ENCODE measurements at regions of chr20 and their contacts with region 1.

Region 1: DNA sequence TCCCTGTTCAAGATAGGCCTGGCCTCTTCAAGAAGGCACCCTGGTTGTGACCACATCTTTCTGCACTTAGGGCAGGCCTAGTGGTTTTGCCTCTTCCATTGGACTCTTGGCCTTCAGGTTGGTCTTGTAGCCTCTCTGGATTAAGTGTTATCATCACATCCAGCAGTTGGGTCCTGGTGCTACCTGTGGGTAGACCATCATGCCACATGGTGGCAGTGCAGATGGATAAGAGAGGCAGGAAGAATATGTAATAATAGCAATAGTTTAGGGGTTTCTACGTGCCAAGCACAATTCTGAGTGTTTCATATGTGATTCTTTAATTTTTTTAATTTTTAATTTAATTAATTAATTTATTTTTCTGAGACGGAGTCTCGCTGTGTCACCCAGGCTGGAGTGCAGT is 28.5 kb upstream of the SNRPB2 start:
- DNase-seq: no peak
- ATAC-seq: no peak
- H3K4me3 ChIP-seq: no peak overlapping the region
- H3K27ac ChIP-seq: no peak overlapping the region
- H3K4me1 ChIP-seq: no peaks in the 10 kb centered on the region
- H3K27me3 ChIP-seq: peaks cover 0 to 5% (median 0%) of the 10 kb centered on the region in 9 donors
- CTCF ChIP-seq: peak in 5 of 12 donors; percentile 13 to 34 (median 18)
- POLR2A ChIP-seq: no peak

Region 2: GRCh38 chr20:16761305-16761829 is 60.1 kb after region 1 on chr20:
- intact Hi-C with region 1: loop called in 5 of 10 experiments (anchors 5 to 10 kb)
- DNase-seq: peak in 4 of 5 donors; percentile 26 to 38 (median 26)
- ATAC-seq: peak in 3 of 4 donors; percentile 76 to 78 (median 78)
- H3K4me3 ChIP-seq: no peak overlapping the region
- H3K27ac ChIP-seq: no peak overlapping the region
- H3K4me1 ChIP-seq: peaks cover 0 to 5% (median 0%) of the 10 kb centered on the region in 12 donors
- H3K27me3 ChIP-seq: peaks cover 0 to 14% (median 2%) of the 10 kb centered on the region in 9 donors
- CTCF ChIP-seq: peak; percentile 47 to 76 (median 68)
- POLR2A ChIP-seq: no peak

Measured in heart left ventricle (tissue), 16 donors.